Naive thymus-derived CD4-positive, alpha-beta T cell (primary cell): ENCODE measurements at regions of chr3 and their contacts with region 1.

Region 1: DNA sequence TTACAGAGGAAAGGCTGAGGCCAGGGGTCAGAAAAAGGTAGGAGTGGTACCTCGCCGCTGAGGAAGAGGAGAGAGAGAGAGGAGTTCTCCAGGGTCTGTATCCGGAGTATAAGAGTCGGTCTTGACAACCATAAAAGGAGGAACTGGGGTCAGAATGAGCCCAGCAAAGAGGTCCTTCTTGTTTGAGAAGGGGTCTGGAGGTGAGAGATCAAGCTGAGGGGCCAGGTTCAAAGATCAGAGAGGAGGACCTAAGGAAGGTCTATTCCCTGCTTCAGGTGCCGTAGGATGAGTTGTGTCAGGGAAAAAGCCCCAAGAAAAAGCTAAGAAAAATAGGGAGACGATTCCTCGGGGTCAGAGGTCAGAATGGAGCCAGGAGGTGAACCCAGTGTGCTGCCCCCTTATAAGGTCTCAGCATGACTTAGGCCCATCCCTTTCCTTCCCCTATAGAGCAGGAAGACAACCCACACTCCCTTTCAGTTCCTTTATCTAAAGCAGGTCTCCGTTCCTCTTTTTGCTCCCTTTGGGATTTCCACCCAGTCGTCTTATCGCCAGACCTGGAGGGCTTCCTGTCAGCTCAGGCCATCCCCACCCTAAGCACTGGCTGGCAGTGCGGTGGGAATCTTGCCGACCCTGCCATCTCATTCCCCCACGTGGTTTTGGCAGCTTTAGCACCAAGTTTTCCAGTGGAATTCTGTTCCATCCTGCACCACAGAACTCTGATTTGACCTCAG is 651 bp downstream of the MTMR14 start:
- DNase-seq: peak in 2 of 9 donors; percentile 4 to 5
- ATAC-seq: peak; percentile 15
- H3K4me3 ChIP-seq: peak overlapping the region; percentile 97
- H3K4me3 Mint-ChIP-seq: peak overlapping the region; percentile 86 to 98 (median 95)
- H3K27ac ChIP-seq: peak overlapping the region; percentile 85
- H3K27ac Mint-ChIP-seq: peak overlapping the region; percentile 91 to 98 (median 97)
- H3K4me1 ChIP-seq: peaks cover 15 to 19% of the 10 kb centered on the region in 2 donors
- H3K4me1 Mint-ChIP-seq: peaks cover 19 to 51% (median 37%) of the 10 kb centered on the region in 7 donors
- H3K27me3 ChIP-seq: no peaks in the 10 kb centered on the region
- H3K27me3 Mint-ChIP-seq: peaks cover 0 to 3% (median 0%) of the 10 kb centered on the region in 5 donors

Region 2: DNA sequence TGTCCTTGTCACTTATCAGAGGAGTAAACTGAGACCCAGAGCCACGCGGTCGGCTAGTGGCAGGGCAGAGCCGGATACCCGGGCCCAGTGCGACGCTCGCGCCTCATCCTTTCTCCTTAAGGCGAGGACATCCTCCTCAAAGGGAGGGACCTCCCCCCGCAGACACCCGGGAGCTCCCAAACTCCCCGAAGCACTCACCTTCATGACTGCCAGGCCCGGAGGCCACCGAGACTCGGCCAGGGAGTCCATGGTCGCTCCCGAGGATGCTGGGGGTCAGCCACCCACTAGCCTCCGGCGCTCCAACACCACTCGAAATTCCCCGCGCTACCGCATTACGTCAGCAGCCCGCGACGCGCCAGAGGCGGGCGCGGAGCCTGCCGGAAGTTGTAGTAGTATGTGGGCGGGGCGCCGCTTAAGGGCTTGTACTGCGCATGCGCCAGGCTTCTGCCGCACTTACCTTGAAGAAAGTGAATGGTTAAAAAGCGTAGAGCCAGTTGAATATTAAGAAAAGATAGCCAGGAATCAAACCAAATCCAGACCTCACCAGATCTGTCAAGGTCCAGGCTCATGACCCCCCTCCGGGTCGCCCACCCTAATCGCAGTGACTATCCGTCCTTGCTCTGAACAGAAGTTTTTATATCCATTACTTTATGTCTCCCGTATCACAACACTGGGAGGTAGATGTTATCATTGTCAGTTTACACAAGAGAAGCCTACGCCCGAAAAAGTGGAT is 686.7 kb before region 1 on chr3 and contains the start of gene RAD18:
- CTCF ChIA-PET with region 1: no interaction called
- POLR2A ChIA-PET with region 1: no interaction called
- intact Hi-C with region 1: loop called (anchors 1 kb)
- DNase-seq: peak; percentile 87 to 95 (median 92)
- ATAC-seq: peak; percentile 97
- H3K4me3 ChIP-seq: peak within 1 kb of the TSS; percentile 80
- H3K4me3 Mint-ChIP-seq: peak within 1 kb of the TSS; percentile 85 to 99 (median 96)
- H3K27ac ChIP-seq: peak within 1 kb of the TSS; percentile 94
- H3K27ac Mint-ChIP-seq: peak within 1 kb of the TSS; percentile 94 to 99 (median 97)
- H3K4me1 ChIP-seq: peaks cover 6 to 10% of the 10 kb centered on the region in 2 donors
- H3K4me1 Mint-ChIP-seq: peaks cover 7 to 45% (median 38%) of the 10 kb centered on the region in 7 donors
- H3K27me3 ChIP-seq: no peaks in the 10 kb centered on the region
- H3K27me3 Mint-ChIP-seq: peaks cover 0 to 8% (median 4%) of the 10 kb centered on the region in 5 donors
- total RNA-seq, gene RAD18: 9.3 to 36.4 (median 18.2) TPM

Region 3: DNA sequence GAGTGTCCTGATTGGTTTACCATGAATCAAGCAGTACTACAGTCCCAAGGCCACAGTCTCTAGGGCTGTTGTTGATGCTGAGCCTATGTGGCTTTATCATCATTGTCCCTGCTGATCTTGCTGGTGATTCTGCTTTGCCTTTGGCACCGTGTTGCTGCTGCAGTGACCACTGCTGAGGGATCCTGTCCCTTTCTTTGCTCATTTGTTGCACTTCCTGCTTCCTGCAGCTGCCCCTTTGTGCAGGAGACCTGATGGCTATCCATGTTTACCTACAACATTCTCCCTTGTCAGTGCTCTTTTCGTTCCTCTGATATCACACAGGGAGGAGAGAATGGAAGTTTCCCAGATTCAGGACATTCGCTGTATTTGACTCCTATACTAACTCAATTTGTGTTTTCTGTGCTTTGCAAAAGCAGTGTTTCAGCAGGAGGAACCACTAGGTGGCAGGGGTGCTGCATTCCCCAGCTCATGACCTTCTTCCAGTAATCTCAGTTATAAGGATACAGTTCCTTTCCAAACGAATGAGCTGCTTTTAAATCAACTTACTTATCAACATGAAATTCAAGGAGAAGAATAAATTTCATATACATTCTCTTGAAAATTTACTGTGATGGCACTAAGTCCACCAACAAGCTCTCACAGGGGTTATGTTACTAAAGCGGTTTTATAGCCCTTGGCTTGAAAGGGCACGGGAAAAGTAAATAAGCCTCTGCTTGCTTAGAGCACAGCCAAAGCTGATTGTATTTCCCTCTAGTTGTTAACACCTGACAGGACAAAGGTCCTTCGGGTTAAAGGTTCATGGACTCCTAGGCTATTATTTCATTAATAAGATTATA is 296.8 kb before region 1 on chr3:
- CTCF ChIA-PET with region 1: interaction called, 3 read pairs
- POLR2A ChIA-PET with region 1: no interaction called
- intact Hi-C with region 1: loop called in 1 of 2 experiments (anchors 1 kb)
- DNase-seq: peak; percentile 21 to 57 (median 51)
- ATAC-seq: peak; percentile 85
- H3K4me3 ChIP-seq: no peak overlapping the region
- H3K4me3 Mint-ChIP-seq: no peak overlapping the region
- H3K27ac ChIP-seq: no peak overlapping the region
- H3K27ac Mint-ChIP-seq: peak overlapping the region in 2 of 9 donors; percentile 13 to 17
- H3K4me1 ChIP-seq: no peaks in the 10 kb centered on the region
- H3K4me1 Mint-ChIP-seq: peaks cover 4 to 13% (median 5%) of the 10 kb centered on the region in 7 donors
- H3K27me3 ChIP-seq: no peaks in the 10 kb centered on the region
- H3K27me3 Mint-ChIP-seq: peaks cover 0 to under 1% (median 0%) of the 10 kb centered on the region in 5 donors

Region 4: DNA sequence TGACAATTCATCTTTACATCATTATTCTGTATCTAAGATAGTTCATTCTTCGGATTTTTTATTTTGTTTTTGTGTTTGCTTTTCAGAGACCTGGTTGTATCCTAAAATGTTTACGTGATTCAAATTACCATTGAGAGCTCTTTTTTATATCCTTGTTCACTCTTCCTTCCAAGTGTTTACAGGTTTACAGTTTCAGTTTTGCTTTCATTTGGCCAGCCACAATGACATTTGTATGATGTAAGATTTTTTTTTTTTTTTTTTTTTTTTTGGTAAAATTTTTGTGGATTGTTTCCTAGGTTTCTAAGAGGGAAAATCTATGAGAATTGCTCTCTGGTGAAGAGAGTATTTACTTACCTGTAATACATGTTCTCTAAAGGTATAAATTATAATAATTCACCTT is 197.5 kb before region 1 on chr3:
- CTCF ChIA-PET with region 1: no interaction called
- POLR2A ChIA-PET with region 1: no interaction called
- intact Hi-C with region 1: loop called in 1 of 2 experiments (anchors 1 kb)
- DNase-seq: peak in 2 of 9 donors; percentile 0 to 9
- ATAC-seq: no peak
- H3K4me3 ChIP-seq: no peak overlapping the region
- H3K4me3 Mint-ChIP-seq: peak overlapping the region in 3 of 10 donors; percentile 25 to 86 (median 50)
- H3K27ac ChIP-seq: peak overlapping the region; percentile 11
- H3K27ac Mint-ChIP-seq: peak overlapping the region in 8 of 9 donors; percentile 45 to 98 (median 82)
- H3K4me1 ChIP-seq: peaks cover 0 to 3% of the 10 kb centered on the region in 2 donors
- H3K4me1 Mint-ChIP-seq: peaks cover 11 to 34% (median 18%) of the 10 kb centered on the region in 7 donors
- H3K27me3 ChIP-seq: no peaks in the 10 kb centered on the region
- H3K27me3 Mint-ChIP-seq: no peaks in the 10 kb centered on the region

Region 5: DNA sequence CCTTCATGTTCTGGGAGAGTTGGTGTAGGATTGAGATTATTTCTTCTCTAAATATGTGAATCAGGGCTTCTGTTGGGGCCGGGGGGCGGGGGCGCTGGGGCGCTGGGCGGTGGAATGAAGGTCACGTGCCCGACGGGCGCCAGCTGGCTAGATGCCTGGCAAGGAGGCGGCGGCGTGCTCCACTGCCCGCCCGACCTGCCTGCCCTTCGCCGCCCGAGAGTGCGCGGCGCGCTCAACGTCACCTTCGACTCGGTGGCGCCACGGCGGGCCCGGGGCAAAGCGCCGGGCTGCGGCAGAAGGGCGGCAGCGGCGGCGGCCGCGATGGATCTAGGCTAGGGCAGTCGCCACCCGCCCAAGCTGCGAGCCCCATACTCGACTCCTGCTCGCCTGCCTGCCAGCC is 49.4 kb before region 1 on chr3:
- CTCF ChIA-PET with region 1: no interaction called
- POLR2A ChIA-PET with region 1: no interaction called
- intact Hi-C with region 1: no loop called
- DNase-seq: peak in 1 of 9 donors; percentile 22
- ATAC-seq: no peak
- H3K4me3 ChIP-seq: no peak overlapping the region
- H3K4me3 Mint-ChIP-seq: peak overlapping the region in 8 of 10 donors; percentile 34 to 71 (median 66)
- H3K27ac ChIP-seq: no peak overlapping the region
- H3K27ac Mint-ChIP-seq: no peak overlapping the region
- H3K4me1 ChIP-seq: no peaks in the 10 kb centered on the region
- H3K4me1 Mint-ChIP-seq: peaks cover 0 to 10% (median 6%) of the 10 kb centered on the region in 7 donors
- H3K27me3 ChIP-seq: peaks cover 0 to 4% of the 10 kb centered on the region in 2 donors
- H3K27me3 Mint-ChIP-seq: peaks cover 29 to 63% (median 51%) of the 10 kb centered on the region in 5 donors

Region 6: DNA sequence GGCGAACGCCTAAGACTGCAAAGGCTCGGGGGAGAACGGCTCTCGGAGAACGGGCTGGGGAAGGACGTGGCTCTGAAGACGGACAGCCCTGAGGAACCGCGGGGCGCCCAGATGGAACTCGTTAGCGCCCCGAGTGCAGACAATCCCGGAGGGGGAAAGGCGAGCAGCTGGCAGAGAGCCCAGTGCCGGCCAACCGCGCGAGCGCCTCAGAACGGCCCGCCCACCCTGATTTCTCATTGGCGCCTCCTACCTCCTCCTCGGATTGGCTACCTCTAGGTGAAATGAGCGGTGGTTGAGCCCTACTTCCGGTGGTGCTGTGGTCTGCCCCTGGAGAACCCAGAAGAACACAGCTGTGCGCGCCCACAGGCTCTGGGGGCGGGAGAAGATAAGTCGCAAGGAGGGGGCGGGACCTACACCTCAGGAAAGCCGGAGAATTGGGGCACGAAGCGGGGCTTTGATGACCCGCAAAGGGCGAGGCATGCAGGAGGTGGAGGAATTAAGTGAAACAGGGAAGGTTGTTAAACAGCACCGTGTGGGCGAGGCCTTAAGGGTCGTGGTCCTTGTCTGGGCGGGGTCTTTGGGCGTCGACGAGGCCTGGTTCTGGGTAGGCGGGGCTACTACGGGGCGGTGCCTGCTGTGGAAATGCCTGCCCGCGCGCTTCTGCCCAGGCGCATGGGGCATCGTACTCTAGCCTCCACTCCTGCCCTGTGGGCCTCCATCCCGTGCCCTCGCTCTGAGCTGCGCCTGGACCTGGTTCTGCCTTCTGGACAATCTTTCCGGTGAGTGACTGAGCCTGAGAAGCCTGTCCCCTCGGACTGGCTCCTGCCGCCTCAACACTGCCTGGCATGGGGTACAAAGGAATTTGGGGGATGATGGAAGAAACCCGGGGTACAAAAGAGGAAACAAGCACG is 99.9 kb after region 1 on chr3 and contains the start of gene OGG1:
- CTCF ChIA-PET with region 1: no interaction called
- POLR2A ChIA-PET with region 1: interaction called, 10 read pairs
- intact Hi-C with region 1: loop called (anchors 1 kb)
- DNase-seq: peak; percentile 77 to 95 (median 94)
- ATAC-seq: peak; percentile 97
- H3K4me3 ChIP-seq: peak within 1 kb of the TSS; percentile 84
- H3K4me3 Mint-ChIP-seq: peak within 1 kb of the TSS; percentile 93 to 98 (median 96)
- H3K27ac ChIP-seq: peak within 1 kb of the TSS; percentile 73
- H3K27ac Mint-ChIP-seq: peak within 1 kb of the TSS; percentile 86 to 96 (median 93)
- H3K4me1 ChIP-seq: peaks cover 13 to 22% of the 10 kb centered on the region in 2 donors
- H3K4me1 Mint-ChIP-seq: peaks cover 30 to 58% (median 47%) of the 10 kb centered on the region in 7 donors
- H3K27me3 ChIP-seq: no peaks in the 10 kb centered on the region
- H3K27me3 Mint-ChIP-seq: no peaks in the 10 kb centered on the region
- total RNA-seq, gene OGG1: 18.8 to 42.9 (median 31.6) TPM